K562 (cell line): ENCODE measurements at regions of chr17 and their contacts with region 1.

Region 1: DNA sequence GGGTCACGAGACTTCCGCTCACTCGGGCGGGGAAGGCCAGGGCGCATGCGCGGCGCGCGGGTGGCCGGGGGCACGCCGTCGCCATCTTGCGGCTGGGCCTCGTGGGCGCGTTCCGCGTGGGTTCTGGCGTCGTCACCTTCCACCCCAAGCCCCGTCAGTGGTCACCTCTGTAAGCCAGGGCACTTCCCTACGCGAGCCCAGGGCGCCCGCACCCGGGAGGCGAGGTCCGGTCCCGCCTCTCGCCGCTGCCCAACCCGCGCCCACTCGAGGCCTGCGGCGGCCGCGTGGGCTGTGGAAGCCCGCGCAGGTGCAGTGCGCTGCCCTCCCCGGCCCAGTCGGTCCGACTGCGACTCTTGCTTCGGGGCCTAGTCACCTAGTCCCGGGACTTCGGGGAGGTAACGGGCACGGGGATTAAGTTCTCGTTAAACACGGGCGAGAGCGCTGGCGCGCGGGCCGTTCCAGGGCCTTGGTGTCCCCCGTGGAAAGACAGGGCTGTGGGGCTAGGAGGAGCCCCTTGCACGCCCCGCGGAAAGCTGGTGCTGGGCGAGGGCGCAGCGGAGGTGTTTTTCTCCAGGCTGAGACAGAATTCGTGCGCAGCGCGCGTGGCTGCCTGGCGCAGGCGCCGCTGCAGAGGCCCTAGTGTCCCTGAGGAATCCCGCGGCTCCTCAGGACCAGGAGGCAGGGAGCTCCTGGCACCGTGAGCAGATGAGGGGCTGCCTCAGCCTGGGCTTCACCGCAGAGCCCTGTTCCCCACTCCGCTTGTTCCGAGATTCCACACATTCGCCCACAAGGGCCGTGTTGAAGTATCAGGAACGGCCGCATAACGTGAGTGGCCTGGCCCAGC is 472 bp upstream of the ARHGDIA start:
- DNase-seq: peak in 2 of 4 experiments; percentile 95 to 97
- ATAC-seq: peak; percentile 4
- H3K4me3 ChIP-seq: peak overlapping the region; percentile 93
- H3K27ac ChIP-seq: peak overlapping the region; percentile 100
- H3K4me1 ChIP-seq: peaks cover 27 to 65% of the 10 kb centered on the region in 2 experiments
- H3K27me3 ChIP-seq: no peaks in the 10 kb centered on the region
- CTCF ChIP-seq: peak in 2 of 3 experiments; percentile 27 to 29; a peak in 3 of 6 replicates
- EP300 ChIP-seq: no peak
- POLR2A ChIP-seq: peak; percentile 75
- RAD21 ChIP-seq: no peak

Region 2: DNA sequence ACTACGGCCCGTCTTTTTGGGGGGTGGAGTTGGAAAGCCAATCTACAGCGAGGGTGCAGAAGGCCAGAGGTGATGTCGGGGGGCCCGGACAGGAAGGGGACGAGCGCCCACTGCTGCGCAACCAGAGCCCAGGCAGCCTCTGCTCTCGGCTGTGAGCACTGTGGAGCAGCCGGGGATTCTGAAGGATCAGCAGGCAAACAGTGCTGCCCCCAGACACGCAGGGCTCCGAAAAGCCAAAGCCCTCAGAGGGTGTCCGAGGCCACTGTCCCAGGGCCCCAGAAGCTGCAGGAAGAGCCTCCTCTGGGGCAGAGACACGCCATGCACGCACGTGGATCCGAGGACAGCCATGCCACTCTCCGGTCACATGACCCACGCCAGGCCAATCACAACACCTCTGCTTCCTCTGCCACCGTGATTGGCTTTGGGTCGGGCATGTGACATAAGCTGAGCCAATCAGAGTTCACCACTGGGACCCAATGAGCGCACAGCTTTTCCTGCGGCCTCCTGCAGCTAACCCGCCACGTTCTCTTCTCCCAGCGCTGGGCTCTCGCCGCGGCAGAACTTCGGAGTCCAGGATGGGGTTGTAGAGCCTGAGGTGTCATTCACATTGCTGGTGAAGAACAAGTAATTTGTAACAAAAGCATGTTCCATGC is 399.7 kb before region 1 on chr17:
- CTCF ChIA-PET with region 1: no interaction called
- POLR2A ChIA-PET with region 1: no interaction called
- in situ Hi-C with region 1: no loop called
- intact Hi-C with region 1: no loop called
- DNase-seq: peak; percentile 95 to 99 (median 98)
- ATAC-seq: peak; percentile 99
- H3K4me3 ChIP-seq: peak overlapping the region; percentile 19; the same call in 1 of the 2 replicates
- H3K27ac ChIP-seq: peak overlapping the region; percentile 81
- H3K4me1 ChIP-seq: peaks cover 0 to 45% of the 10 kb centered on the region in 2 experiments; a peak in 3 of 5 replicates
- H3K27me3 ChIP-seq: no peaks in the 10 kb centered on the region
- CTCF ChIP-seq: peak; percentile 55 to 56 (median 55); a peak in 4 of 6 replicates
- EP300 ChIP-seq: no peak
- POLR2A ChIP-seq: peak; percentile 73
- RAD21 ChIP-seq: peak; percentile 90

Region 3: GRCh38 chr17:81733507-81734404 is 137.9 kb before region 1 on chr17:
- CTCF ChIA-PET with region 1: interaction called, 3 read pairs
- POLR2A ChIA-PET with region 1: interaction called, 12 read pairs
- in situ Hi-C with region 1: no loop called
- intact Hi-C with region 1: no loop called
- DNase-seq: peak; percentile 81 to 92 (median 90)
- ATAC-seq: peak; percentile 96
- H3K4me3 ChIP-seq: no peak overlapping the region
- H3K27ac ChIP-seq: no peak overlapping the region
- H3K4me1 ChIP-seq: peaks cover 10 to 62% of the 10 kb centered on the region in 2 experiments; a peak in 4 of 5 replicates
- H3K27me3 ChIP-seq: no peaks in the 10 kb centered on the region
- CTCF ChIP-seq: peak; percentile 92 to 94 (median 92)
- EP300 ChIP-seq: no peak
- POLR2A ChIP-seq: no peak
- RAD21 ChIP-seq: peak; percentile 78 to 94

Region 4: DNA sequence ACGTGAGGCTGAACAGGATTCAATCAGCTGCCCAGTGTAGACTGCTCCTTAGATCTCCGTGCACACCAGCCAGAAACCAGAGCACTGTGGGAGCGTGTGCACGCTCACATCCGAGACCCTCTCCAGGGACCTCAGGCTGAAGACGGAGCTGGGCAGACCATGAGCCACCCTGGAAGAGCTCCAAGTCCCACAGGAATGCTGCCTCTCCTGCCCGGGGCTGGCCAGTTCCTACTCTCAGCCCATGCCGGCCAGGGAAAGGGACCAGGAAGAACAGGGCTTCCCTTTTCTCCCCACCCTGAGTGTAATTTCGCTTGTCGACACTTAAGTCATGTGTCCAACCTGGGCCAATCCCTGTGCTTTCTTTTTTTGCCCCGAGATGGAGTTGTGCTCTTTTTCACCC is 12.9 kb after region 1 on chr17:
- CTCF ChIA-PET with region 1: no interaction called
- POLR2A ChIA-PET with region 1: interaction called, 85 read pairs
- in situ Hi-C with region 1: no loop called
- intact Hi-C with region 1: no loop called
- DNase-seq: no peak
- ATAC-seq: peak; percentile 44
- H3K4me3 ChIP-seq: no peak overlapping the region
- H3K27ac ChIP-seq: no peak overlapping the region
- H3K4me1 ChIP-seq: peaks cover 0 to 30% of the 10 kb centered on the region in 2 experiments; a peak in 2 of 5 replicates
- H3K27me3 ChIP-seq: no peaks in the 10 kb centered on the region
- CTCF ChIP-seq: no peak
- EP300 ChIP-seq: no peak
- POLR2A ChIP-seq: no peak
- RAD21 ChIP-seq: no peak

Region 5: GRCh38 chr17:81890447-81891299 is 19.1 kb after region 1 on chr17:
- CTCF ChIA-PET with region 1: no interaction called
- POLR2A ChIA-PET with region 1: interaction called, 85 read pairs
- in situ Hi-C with region 1: no loop called
- intact Hi-C with region 1: no loop called
- DNase-seq: peak in 3 of 4 experiments; percentile 48 to 81 (median 80)
- ATAC-seq: 0 out of 3 replicates have a peak, but pooled peaks have one; percentile 5
- H3K4me3 ChIP-seq: peak overlapping the region; percentile 73
- H3K27ac ChIP-seq: peak overlapping the region; percentile 97
- H3K4me1 ChIP-seq: peaks cover 12 to 46% of the 10 kb centered on the region in 2 experiments; a peak in 4 of 5 replicates
- H3K27me3 ChIP-seq: no peaks in the 10 kb centered on the region
- CTCF ChIP-seq: no peak
- EP300 ChIP-seq: no peak
- POLR2A ChIP-seq: no peak
- RAD21 ChIP-seq: no peak